ENCODE measurements at regions of chr4 and their contacts with region 1.

Region 1: GRCh38 chr4:8468746-8469535 is 28.4 kb downstream of the TRMT44 start:
- DNase-seq: peak; percentile 25
- H3K4me3 Mint-ChIP-seq: no peak overlapping the region
- H3K27ac Mint-ChIP-seq: no peak overlapping the region
- H3K4me1 Mint-ChIP-seq: no peaks in the 10 kb centered on the region
- H3K27me3 Mint-ChIP-seq: no peaks in the 10 kb centered on the region

Region 2: GRCh38 chr4:8340781-8341241 is 128.1 kb before region 1 on chr4:
- intact Hi-C with region 1: no loop called
- DNase-seq: no peak
- H3K4me3 Mint-ChIP-seq: no peak overlapping the region
- H3K27ac Mint-ChIP-seq: no peak overlapping the region
- H3K4me1 Mint-ChIP-seq: no peaks in the 10 kb centered on the region
- H3K27me3 Mint-ChIP-seq: no peaks in the 10 kb centered on the region

Region 3: DNA sequence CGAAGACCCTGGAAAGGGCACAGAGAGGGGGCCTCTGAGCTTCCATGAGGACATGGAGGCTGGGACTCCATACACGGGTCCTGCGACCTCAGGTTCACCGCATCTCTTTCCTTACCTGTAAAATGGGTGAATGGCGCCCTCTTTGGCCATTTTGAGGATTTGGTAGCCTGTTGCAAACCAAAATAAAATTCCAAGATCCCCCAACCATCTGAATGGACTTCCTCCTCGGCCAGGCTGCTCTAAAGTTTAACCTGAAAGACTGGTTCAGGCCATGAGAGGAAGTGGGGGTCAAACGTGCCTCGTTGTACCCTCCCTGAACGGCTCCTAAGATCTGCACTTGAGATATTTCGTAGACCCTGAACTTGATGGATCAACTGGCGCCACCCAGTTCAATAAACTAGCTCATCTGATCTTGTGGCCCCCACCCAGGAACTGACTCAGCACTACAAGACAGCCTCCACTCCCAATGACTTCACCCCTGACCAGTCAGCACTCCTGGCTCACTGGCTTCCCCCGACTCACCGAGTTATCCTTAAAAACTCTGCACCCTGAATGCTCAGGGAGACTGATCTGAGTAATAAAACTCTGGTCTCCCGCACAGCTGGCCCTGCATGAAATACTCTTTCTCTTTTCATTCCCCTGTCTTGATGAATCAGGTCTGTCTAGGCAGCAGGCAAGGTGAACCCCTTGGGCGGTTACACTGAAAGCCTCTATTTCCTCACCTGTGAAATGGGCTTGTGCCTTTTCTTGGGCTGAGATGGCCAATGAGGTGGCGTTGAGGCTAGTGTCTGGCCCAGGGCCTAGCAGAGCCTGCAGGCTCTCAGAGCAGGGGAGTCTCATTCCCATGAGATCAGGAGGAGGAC is 78.4 kb after region 1 on chr4:
- intact Hi-C with region 1: loop called (anchors 1 kb)
- DNase-seq: no peak
- H3K4me3 Mint-ChIP-seq: no peak overlapping the region
- H3K27ac Mint-ChIP-seq: no peak overlapping the region
- H3K4me1 Mint-ChIP-seq: no peaks in the 10 kb centered on the region
- H3K27me3 Mint-ChIP-seq: no peaks in the 10 kb centered on the region

Measured in activated T-helper 1 cell treated with anti-CD3 and anti-CD28 coated beads, Interleukin-12 subunit alpha, Interleukin-12 subunit beta, Interleukin-2, Interleukin-4 antibody, amounts not matched to agents 30 ng/mL and 10 ng/mL and 1 ng/mL, durations not matched to agents 14 hours and 24 hours and 36 hours (primary cell).